Endothelial cell of umbilical vein (primary cell): ENCODE measurements at regions of chr11 and their contacts with region 1.

Region 1: DNA sequence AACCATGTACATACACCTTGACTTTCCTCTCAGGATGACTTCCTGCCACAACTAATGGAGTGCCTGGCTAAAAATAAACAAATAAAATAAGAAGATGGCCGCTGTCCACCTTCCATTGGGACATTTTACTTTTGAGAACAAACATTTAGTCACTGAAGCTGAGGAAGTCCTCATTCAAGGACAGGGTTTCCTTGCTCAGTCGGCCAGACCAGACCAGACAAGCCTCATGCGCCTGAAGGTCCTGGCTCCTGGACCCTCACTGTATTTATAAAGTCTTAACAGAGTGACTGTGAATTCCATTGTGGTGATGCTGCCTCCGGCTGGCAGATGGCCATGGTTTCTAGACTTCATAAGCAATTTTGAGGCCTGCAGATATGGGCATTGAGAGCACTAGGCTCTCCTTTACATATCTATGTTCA is 114.5 kb downstream of the MAML2 start:
- DNase-seq: peak; percentile 96
- H3K4me3 ChIP-seq: peak overlapping the region in 1 of 3 experiments; percentile 9
- H3K27ac ChIP-seq: peak overlapping the region; percentile 98
- H3K4me1 ChIP-seq: peaks cover 50% of the 10 kb centered on the region
- H3K27me3 ChIP-seq: no peaks in the 10 kb centered on the region
- CTCF ChIP-seq: no peak
- POLR2A ChIP-seq: no peak

Region 2: GRCh38 chr11:95923728-95924413 is 304.6 kb before region 1 on chr11 and contains the start of gene MTMR2:
- CTCF ChIA-PET with region 1: no interaction called
- POLR2A ChIA-PET with region 1: no interaction called
- dilution Hi-C with region 1: no loop called
- intact Hi-C with region 1: loop called (anchors 5 kb)
- DNase-seq: peak; percentile 82
- H3K4me3 ChIP-seq: peak within 1 kb of the TSS; percentile 92 to 99 (median 98)
- H3K27ac ChIP-seq: peak within 1 kb of the TSS; percentile 75
- H3K4me1 ChIP-seq: peaks cover 32% of the 10 kb centered on the region
- H3K27me3 ChIP-seq: no peaks in the 10 kb centered on the region
- CTCF ChIP-seq: no peak
- POLR2A ChIP-seq: peak; percentile 97
- total RNA-seq, gene MTMR2: 46.4 and 49.5 TPM in 2 replicates

Region 3: DNA sequence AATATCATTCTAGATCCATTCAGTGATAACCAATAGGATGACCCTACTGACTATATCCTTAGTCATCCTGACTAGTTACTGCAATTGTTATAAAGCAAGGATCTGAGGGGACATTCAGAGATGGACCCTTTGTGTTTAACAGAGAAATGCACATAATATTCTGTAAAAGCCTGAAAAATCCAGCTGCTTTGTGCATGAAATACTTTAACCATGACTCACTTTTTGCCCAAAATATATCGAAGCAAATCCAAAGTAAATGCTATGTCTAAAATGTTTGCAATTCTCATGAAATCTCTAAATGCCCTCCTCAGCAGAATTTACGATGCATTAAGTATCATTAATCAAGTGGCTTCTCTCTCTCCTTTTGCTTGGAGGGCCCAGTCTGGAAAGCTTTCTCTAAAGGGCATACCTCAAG is 125.8 kb before region 1 on chr11:
- CTCF ChIA-PET with region 1: no interaction called
- POLR2A ChIA-PET with region 1: no interaction called
- dilution Hi-C with region 1: no loop called
- intact Hi-C with region 1: loop called (anchors 2 kb)
- DNase-seq: peak; percentile 55
- H3K4me3 ChIP-seq: no peak overlapping the region
- H3K27ac ChIP-seq: peak overlapping the region; percentile 74
- H3K4me1 ChIP-seq: peaks cover 30% of the 10 kb centered on the region
- H3K27me3 ChIP-seq: no peaks in the 10 kb centered on the region
- CTCF ChIP-seq: no peak
- POLR2A ChIP-seq: no peak

Region 4: DNA sequence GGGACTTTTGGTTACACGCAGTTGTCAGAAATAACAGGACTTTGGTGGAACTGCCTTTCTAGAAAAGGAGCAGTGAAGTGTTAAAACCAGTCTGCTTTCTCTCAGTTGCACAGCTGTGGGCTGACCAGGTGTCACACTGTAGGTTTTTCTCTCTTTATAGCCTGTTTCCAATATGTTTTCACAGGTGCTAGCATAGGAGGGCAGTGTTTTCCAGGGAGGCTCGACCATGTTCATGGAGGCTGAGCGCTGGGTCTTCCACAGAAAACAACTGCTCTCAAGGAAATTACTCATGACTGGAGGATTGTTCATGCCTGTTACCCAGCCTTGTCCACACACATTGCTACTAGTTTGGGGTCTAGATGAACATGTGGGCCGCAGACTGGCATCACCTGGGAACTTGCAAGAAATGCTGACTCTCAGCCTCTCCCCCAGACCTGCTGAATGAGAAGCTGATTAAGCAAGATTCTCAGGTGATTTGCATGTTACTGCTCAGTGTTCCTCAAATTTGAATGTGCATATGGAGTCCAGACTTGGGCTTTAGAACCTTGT is 43.2 kb before region 1 on chr11:
- CTCF ChIA-PET with region 1: no interaction called
- POLR2A ChIA-PET with region 1: no interaction called
- dilution Hi-C with region 1: no loop called
- intact Hi-C with region 1: no loop called
- DNase-seq: peak; percentile 42
- H3K4me3 ChIP-seq: no peak overlapping the region
- H3K27ac ChIP-seq: no peak overlapping the region
- H3K4me1 ChIP-seq: peaks cover 19% of the 10 kb centered on the region
- H3K27me3 ChIP-seq: no peaks in the 10 kb centered on the region
- CTCF ChIP-seq: no peak
- POLR2A ChIP-seq: no peak

Region 5: DNA sequence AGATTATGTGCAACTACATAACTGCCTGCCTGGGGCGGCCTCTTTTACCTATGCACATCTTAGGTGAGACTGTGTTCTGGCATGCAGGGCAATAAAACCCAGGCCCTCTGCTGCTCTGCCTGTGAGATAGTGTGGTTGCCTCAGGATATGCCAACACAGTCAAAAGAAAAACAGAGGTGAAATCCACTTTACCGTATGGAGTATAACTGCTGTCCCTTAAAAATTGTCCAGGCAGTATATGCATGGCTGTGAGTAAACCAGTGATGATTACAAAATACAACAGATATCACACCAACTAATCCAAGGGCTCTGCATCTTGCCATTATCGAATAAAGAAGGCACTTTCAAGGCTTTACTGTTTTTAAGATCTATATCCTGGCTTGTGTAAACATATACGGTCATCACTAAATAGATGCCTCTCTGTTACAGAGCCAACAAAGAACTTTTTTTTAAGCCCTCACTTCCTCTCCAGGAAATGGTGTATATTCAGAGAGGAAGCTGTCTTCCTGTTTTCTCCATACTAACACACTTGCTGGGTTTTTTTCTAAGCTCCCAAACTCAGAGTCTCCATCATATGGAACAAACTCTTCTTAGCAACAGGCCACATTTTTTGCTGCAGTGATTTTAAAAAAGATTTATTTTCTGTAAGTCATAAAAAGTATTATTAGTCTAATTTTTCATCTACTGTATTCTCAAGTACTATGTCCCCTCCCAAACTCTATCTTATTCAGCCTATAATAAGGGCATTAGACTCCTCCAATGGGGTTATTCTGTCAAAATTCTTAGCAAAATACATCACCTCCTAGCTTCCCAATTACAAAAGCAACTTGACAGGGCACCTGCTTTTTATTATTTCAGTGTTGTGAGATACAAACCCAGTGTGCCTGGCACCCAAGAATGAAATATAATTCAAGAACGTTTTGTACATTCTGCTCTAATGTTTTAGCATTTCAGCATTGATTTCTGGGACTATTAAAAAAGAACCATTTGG is 20.7 kb before region 1 on chr11:
- CTCF ChIA-PET with region 1: interaction called, 4 read pairs
- POLR2A ChIA-PET with region 1: no interaction called
- dilution Hi-C with region 1: no loop called
- intact Hi-C with region 1: loop called (anchors 1 kb)
- DNase-seq: peak; percentile 89
- H3K4me3 ChIP-seq: peak overlapping the region in 1 of 3 experiments; percentile 42
- H3K27ac ChIP-seq: peak overlapping the region; percentile 94
- H3K4me1 ChIP-seq: peaks cover 48% of the 10 kb centered on the region
- H3K27me3 ChIP-seq: no peaks in the 10 kb centered on the region
- CTCF ChIP-seq: no peak
- POLR2A ChIP-seq: peak; percentile 72

Region 6: GRCh38 chr11:96242971-96243647 is 14.6 kb after region 1 on chr11:
- CTCF ChIA-PET with region 1: interaction called, 8 read pairs
- POLR2A ChIA-PET with region 1: interaction called, 4 read pairs
- dilution Hi-C with region 1: no loop called
- intact Hi-C with region 1: loop called (anchors 1 kb)
- DNase-seq: peak; percentile 97
- H3K4me3 ChIP-seq: peak overlapping the region in 2 of 3 experiments; percentile 42 to 58
- H3K27ac ChIP-seq: peak overlapping the region; percentile 74
- H3K4me1 ChIP-seq: peaks cover 19% of the 10 kb centered on the region
- H3K27me3 ChIP-seq: no peaks in the 10 kb centered on the region
- CTCF ChIP-seq: no peak
- POLR2A ChIP-seq: peak; percentile 46